ENCODE measurements at regions of chr12 and their contacts with region 1.

Region 1: GRCh38 chr12:55619354-55620138 is 17.1 kb upstream of the OR10P1 start:
- DNase-seq: no peak
- H3K4me3 ChIP-seq: no peak overlapping the region
- H3K27ac ChIP-seq: no peak overlapping the region
- H3K4me1 ChIP-seq: peaks cover 0 to 8% (median 4%) of the 10 kb centered on the region in 4 donors
- H3K27me3 ChIP-seq: no peaks in the 10 kb centered on the region
- CTCF ChIP-seq: peak; percentile 85 to 87 (median 87)
- EP300 ChIP-seq: no peak
- POLR2A ChIP-seq: no peak

Region 2: GRCh38 chr12:55188974-55189556 is 430.5 kb before region 1 on chr12:
- intact Hi-C with region 1: loop called (anchors 2 kb)
- DNase-seq: no peak
- H3K4me3 ChIP-seq: no peak overlapping the region
- H3K27ac ChIP-seq: no peak overlapping the region
- H3K4me1 ChIP-seq: no peaks in the 10 kb centered on the region
- H3K27me3 ChIP-seq: no peaks in the 10 kb centered on the region
- CTCF ChIP-seq: peak; percentile 61 to 70 (median 68)
- EP300 ChIP-seq: no peak
- POLR2A ChIP-seq: no peak

Measured in esophagus muscularis mucosa (tissue), 4 donors.